Calu3 (cell line): ENCODE measurements at regions of chr16 and their contacts with region 1.

Region 1: DNA sequence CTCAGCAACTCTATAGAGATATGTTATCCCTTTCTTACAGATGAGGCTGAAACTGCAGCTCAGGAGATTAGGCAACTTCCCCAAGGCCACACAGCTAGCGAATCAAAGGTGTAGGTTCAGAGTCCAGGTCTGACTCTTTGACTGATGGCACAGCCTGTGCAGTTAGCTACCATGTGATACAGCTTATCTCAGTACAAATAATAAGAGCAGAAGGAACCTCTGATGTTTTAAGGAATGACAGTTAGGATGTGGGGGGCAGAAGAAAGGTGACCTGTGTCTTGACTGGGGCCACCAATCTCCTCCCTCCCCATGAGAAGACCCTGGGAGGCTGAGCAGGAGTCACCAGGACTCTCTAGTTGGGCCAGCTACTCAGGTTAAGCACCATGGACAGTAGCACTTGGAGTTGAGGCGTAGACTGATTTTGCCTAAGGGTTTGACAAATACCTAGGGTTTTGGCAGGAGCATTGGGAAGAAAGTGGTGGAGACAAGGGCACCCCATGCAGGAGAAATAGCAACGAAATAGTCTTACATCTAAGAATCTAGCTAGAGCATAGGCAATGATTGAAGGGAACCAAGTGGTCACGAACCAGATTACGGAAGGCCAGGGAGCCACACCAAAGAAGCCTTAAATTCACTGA is 22.8 kb upstream of the ACSM2B start:
- DNase-seq: no peak
- H3K4me3 Mint-ChIP-seq: no peak overlapping the region
- H3K27ac Mint-ChIP-seq: no peak overlapping the region
- H3K4me1 Mint-ChIP-seq: no peaks in the 10 kb centered on the region
- H3K27me3 Mint-ChIP-seq: peaks cover 53% of the 10 kb centered on the region
- CTCF ChIP-seq: no peak

Region 2: GRCh38 chr16:20424129-20424866 is 174.7 kb before region 1 on chr16:
- CTCF ChIA-PET with region 1: no interaction called
- intact Hi-C with region 1: loop called (anchors 10 kb)
- DNase-seq: no peak
- H3K4me3 Mint-ChIP-seq: no peak overlapping the region
- H3K27ac Mint-ChIP-seq: no peak overlapping the region
- H3K4me1 Mint-ChIP-seq: no peaks in the 10 kb centered on the region
- H3K27me3 Mint-ChIP-seq: peaks cover 39% of the 10 kb centered on the region
- CTCF ChIP-seq: no peak

Region 3: GRCh38 chr16:20695024-20695423 is 96.1 kb after region 1 on chr16:
- CTCF ChIA-PET with region 1: interaction called, 4 read pairs
- intact Hi-C with region 1: loop called (anchors 1 kb)
- DNase-seq: no peak
- H3K4me3 Mint-ChIP-seq: no peak overlapping the region
- H3K27ac Mint-ChIP-seq: no peak overlapping the region
- H3K4me1 Mint-ChIP-seq: peaks cover 10% of the 10 kb centered on the region
- H3K27me3 Mint-ChIP-seq: peaks cover 49% of the 10 kb centered on the region
- CTCF ChIP-seq: no peak

Region 4: GRCh38 chr16:20704281-20704680 is 105.3 kb after region 1 on chr16:
- CTCF ChIA-PET with region 1: no interaction called
- intact Hi-C with region 1: loop called (anchors 1 kb)
- DNase-seq: no peak
- H3K4me3 Mint-ChIP-seq: no peak overlapping the region
- H3K27ac Mint-ChIP-seq: no peak overlapping the region
- H3K4me1 Mint-ChIP-seq: no peaks in the 10 kb centered on the region
- H3K27me3 Mint-ChIP-seq: peaks cover 21% of the 10 kb centered on the region
- CTCF ChIP-seq: no peak